Tibial artery (tissue), 4 donors: ENCODE measurements at regions of chr1 and their contacts with region 1.

Region 1: DNA sequence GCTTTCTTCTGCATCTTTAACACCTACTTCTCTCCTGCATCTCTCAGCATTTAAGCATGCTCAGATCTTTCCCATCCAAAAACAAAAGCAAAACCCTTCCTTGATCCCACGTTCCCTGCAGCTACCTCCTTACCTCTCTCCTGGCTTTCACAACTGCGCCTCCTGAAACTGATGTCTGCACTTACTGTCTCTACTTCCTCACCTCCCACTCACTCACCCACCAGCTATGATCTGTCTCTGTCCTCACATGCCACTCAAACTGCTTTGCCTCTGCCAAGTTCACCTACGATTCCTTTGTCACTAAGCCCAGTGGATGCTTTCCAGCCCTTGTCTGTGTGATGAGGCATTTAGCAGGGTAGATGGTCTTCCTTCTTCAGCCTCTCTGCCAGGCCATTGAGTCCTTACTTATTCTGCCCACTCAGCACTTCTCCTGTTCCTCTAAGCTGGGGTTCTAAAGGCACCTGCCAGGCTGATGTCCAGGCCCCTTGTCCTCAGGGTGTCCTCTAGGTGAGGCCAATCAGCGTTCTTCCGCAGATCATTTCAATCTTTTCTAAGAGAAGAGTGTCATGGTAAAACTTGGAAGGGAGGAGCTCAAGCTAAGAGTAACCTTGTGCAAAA is 10.0 kb upstream of the GJB3 start:
- DNase-seq: no peak
- H3K4me3 ChIP-seq: no peak overlapping the region
- H3K27ac ChIP-seq: no peak overlapping the region
- H3K4me1 ChIP-seq: no peaks in the 10 kb centered on the region
- H3K27me3 ChIP-seq: peaks cover 0 to 3% of the 10 kb centered on the region in 2 donors
- CTCF ChIP-seq: no peak

Region 2: DNA sequence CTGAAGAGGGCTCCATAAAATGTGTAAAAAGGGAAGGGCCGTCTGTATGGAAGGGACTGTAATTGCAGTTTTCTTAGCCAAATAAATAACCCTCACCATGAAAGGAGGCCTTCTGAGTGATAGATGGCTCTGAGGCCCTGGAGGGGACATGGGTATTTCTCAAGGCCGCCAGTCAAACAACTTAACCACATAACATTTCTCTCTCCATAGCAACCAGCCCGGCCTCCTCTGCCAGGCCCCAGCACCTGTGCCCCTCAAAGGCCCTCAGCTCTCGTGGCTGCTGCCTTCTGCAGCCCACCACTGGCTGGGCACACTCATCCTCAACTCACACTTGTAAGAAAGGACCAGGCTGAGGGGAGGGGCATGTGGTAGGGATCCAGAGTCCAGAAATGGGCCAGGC is 73.2 kb before region 1 on chr1:
- intact Hi-C with region 1: no loop called
- DNase-seq: no peak
- H3K4me3 ChIP-seq: no peak overlapping the region
- H3K27ac ChIP-seq: no peak overlapping the region
- H3K4me1 ChIP-seq: no peaks in the 10 kb centered on the region
- H3K27me3 ChIP-seq: peaks cover 0 to 17% of the 10 kb centered on the region in 2 donors
- CTCF ChIP-seq: no peak

Region 3: DNA sequence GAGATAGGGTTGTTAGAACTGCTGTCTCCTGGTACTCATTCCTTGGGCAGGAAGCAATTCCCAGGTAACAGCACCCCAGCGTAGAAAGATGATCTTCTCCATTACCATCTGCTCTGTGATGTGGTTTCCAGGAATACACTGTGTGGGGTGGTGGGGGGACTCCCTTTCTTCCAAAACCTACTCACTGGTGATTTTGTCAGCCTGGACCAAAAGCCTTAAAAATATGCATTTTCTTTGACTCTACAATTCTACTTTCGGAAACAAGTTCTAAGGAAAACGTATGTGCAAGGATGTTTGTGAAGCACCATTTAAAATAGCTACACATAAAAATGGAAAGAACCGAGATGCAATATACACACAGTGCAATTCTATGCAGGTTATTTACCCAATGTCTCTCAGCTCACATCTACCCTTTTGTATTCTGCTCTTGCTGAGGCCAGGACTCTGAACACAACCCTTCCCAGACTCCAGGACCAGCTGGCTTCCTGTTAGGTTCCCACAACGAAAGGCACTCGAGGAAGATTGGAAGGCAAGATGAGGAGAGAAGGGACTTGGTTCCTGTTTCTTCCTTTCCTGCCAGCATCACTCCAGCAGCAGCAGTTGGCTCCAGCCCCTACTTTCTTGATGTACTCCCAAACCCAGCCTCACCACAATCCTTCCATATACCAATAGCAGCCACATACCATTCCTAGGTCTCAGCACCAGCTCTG is 49.2 kb before region 1 on chr1:
- intact Hi-C with region 1: no loop called
- DNase-seq: no peak
- H3K4me3 ChIP-seq: no peak overlapping the region
- H3K27ac ChIP-seq: no peak overlapping the region
- H3K4me1 ChIP-seq: no peaks in the 10 kb centered on the region
- H3K27me3 ChIP-seq: peaks cover 0 to 4% of the 10 kb centered on the region in 2 donors
- CTCF ChIP-seq: no peak

Region 4: DNA sequence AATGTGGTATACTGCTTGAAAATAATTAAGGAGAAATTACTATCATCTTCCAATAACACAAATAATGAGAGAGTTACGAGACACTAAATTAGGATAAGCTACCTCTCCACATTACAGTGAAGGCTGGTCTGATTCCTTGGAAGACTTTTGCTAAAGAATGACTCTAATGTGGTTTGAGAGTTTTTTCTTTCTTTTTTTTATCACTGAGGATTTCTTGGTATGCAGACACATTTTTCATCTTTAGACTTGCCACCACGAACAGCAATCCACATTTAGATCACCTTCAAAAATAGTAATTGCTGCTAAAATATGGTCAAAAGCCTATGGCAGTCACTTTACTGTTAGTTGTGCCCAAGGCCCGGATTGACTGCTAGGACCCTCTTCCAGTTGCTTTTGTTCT is 230.7 kb after region 1 on chr1:
- intact Hi-C with region 1: no loop called
- DNase-seq: no peak
- H3K4me3 ChIP-seq: no peak overlapping the region
- H3K27ac ChIP-seq: no peak overlapping the region
- H3K4me1 ChIP-seq: peaks cover 0 to 9% (median 0%) of the 10 kb centered on the region in 4 donors
- H3K27me3 ChIP-seq: no peaks in the 10 kb centered on the region
- CTCF ChIP-seq: no peak

Region 5: GRCh38 chr1:36516372-36517325 is 1745.6 kb after region 1 on chr1:
- intact Hi-C with region 1: loop called (anchors 5 kb)
- DNase-seq: peak; percentile 25 to 62
- H3K4me3 ChIP-seq: no peak overlapping the region
- H3K27ac ChIP-seq: no peak overlapping the region
- H3K4me1 ChIP-seq: no peaks in the 10 kb centered on the region
- H3K27me3 ChIP-seq: peaks cover 0 to 43% of the 10 kb centered on the region in 2 donors
- CTCF ChIP-seq: peak; percentile 48 to 51